ENCODE measurements at regions of chr2 and their contacts with region 1.

Region 1: GRCh38 chr2:8622199-8622952 is 59.5 kb upstream of the ID2 start:
- DNase-seq: no peak
- ATAC-seq: no peak
- H3K4me3 ChIP-seq: no peak overlapping the region
- H3K27ac ChIP-seq: no peak overlapping the region
- H3K4me1 ChIP-seq: no peaks in the 10 kb centered on the region
- H3K27me3 ChIP-seq: peaks cover 3% of the 10 kb centered on the region; the same call in 1 of the 2 replicates
- CTCF ChIP-seq: no peak

Region 2: GRCh38 chr2:8609357-8609811 is 13.0 kb before region 1 on chr2:
- CTCF ChIA-PET with region 1: no interaction called
- POLR2A ChIA-PET with region 1: interaction called, 16 read pairs
- in situ Hi-C with region 1: no loop called
- intact Hi-C with region 1: no loop called
- DNase-seq: no peak
- ATAC-seq: no peak
- H3K4me3 ChIP-seq: no peak overlapping the region
- H3K27ac ChIP-seq: no peak overlapping the region
- H3K4me1 ChIP-seq: no peaks in the 10 kb centered on the region
- H3K27me3 ChIP-seq: no peaks in the 10 kb centered on the region
- CTCF ChIP-seq: no peak

Measured in Panc1 (cell line).